GM12878 (cell line): ENCODE measurements at regions of chr13 and their contacts with region 1.

Region 1: DNA sequence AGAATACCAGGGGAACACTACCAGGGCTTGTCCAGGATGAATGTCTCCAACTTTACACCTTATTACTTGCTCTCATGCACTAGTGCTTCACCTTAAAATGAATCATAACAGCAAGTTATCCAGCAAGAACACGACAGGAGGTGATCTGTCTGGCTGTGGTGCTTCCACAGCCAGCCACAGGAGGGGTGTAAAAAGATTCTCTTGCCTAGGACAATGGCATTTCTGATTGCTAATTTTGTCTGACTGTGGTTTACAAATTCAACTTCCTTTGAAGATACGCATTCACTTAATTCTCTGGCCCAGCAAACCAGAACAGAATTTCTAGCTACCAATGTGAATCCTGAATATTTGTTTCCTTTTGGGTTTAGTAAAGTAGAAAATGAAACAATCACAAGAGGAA is 23.1 kb upstream of the COG3 start:
- DNase-seq: peak; percentile 60
- ATAC-seq: peak; percentile 94
- H3K4me3 ChIP-seq: peak overlapping the region; percentile 26; the same call in 1 of the 2 replicates
- H3K27ac ChIP-seq: 0 out of 2 replicates have a peak overlapping the region, but pooled peaks have one; percentile 23
- H3K4me1 ChIP-seq: peaks cover 16% of the 10 kb centered on the region
- H3K27me3 ChIP-seq: no peaks in the 10 kb centered on the region
- CTCF ChIP-seq: peak; percentile 7 to 43 (median 39); a peak in 2 of 6 replicates
- EP300 ChIP-seq: no peak
- POLR2A ChIP-seq: no peak
- RAD21 ChIP-seq: peak; percentile 35; the same call in 1 of the 2 replicates

Region 2: GRCh38 chr13:44403461-44404056 is 1038.1 kb before region 1 on chr13:
- CTCF ChIA-PET with region 1: no interaction called
- POLR2A ChIA-PET with region 1: no interaction called
- RAD21 ChIA-PET with region 1: no interaction called
- SMC1A ChIA-PET with region 1: no interaction called
- in situ Hi-C with region 1: no loop called
- intact Hi-C with region 1: no loop called
- DNase-seq: no peak
- ATAC-seq: no peak
- H3K4me3 ChIP-seq: no peak overlapping the region
- H3K27ac ChIP-seq: no peak overlapping the region
- H3K4me1 ChIP-seq: no peaks in the 10 kb centered on the region
- H3K27me3 ChIP-seq: peaks cover 0 to 3% of the 10 kb centered on the region in 2 experiments; a peak in 3 of 4 replicates
- CTCF ChIP-seq: no peak
- EP300 ChIP-seq: no peak
- POLR2A ChIP-seq: no peak
- RAD21 ChIP-seq: no peak

Region 3: DNA sequence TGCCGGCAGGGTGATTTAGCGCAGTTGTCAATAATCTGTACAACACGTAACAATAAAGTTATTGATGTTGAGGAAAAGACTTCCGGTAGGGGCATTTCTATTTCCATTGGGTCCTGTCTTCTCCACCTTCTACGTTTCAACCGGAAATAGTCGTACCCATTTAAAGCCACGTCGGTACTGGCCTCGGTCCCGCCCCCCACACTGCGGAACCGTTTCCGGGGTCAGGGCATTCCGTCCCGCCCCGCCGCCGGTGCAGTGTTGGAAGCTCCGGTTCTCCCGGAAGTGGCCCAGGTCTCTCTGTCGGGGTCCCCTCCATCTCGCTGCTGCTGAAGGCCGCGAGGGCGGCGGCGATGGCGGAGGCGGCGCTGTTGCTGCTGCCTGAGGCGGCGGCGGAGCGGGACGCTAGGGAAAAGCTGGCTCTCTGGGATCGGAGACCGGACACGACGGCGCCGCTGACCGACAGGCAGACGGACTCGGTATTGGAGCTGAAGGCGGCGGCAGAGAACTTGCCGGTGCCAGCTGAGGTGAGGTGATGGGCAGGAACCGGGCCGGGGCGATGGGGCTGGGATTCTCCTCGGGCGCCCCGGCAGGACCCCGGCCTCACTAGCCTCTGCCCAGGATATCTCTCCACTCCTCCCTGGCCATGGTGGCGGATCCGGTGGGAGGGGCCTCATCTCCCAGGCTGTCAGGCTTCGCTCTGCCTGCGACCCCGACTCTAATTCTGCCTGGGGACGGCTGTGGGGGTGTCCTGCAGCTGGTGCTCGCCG is 23.2 kb after region 1 on chr13 and contains the start of gene COG3:
- CTCF ChIA-PET with region 1: no interaction called
- POLR2A ChIA-PET with region 1: interaction called, 8 read pairs
- RAD21 ChIA-PET with region 1: no interaction called
- SMC1A ChIA-PET with region 1: interaction called, 4 read pairs
- in situ Hi-C with region 1: no loop called
- intact Hi-C with region 1: loop called (anchors 2 kb)
- DNase-seq: peak; percentile 92
- ATAC-seq: peak; percentile 97
- H3K4me3 ChIP-seq: peak within 1 kb of the TSS; percentile 71
- H3K27ac ChIP-seq: peak within 1 kb of the TSS; percentile 90
- H3K4me1 ChIP-seq: peaks cover 6% of the 10 kb centered on the region
- H3K27me3 ChIP-seq: no peaks in the 10 kb centered on the region
- CTCF ChIP-seq: peak in 2 of 3 experiments; percentile 44 to 46; a peak in 4 of 6 replicates
- EP300 ChIP-seq: peak in 1 of 2 experiments; percentile 14; a peak in 1 of 4 replicates
- POLR2A ChIP-seq: peak; percentile 92
- RAD21 ChIP-seq: peak; percentile 38
- polyA plus RNA-seq, gene COG3: 6.1 to 9.3 TPM